ENCODE measurements at regions of chr12 and their contacts with region 1.

Region 1: DNA sequence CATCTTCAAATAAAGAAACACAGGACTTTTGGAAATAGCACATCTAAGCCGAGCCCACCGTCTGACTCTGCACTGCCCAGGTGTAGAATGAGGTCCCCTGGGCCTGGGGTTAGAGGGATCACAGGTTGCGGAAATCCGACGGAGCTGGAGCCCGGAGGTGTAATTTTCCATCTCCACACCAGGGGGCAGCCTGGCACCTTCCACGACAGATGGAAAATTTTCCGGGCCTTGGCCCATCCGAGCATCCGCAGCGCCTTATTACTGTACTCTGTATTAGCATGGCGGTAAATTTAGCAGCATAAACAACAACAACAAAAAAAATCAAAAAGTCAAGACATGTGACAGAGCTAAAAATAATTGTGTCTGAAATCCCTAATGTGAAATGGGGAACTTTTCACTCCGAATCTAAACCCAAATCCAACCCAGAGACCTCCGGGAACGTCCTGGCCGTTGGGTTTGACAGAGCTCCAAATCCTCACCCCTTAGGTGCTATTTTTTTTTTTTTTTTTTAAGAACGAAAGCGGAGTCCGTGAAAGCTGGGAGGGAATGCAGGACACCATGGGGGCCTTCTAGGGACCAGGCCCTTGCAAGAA is 93.9 kb downstream of the KSR2 start:
- DNase-seq: no peak
- H3K4me3 ChIP-seq: no peak overlapping the region
- H3K27me3 ChIP-seq: peaks cover 5% of the 10 kb centered on the region; the same call in 1 of the 2 replicates
- CTCF ChIP-seq: peak; percentile 89

Region 2: GRCh38 chr12:117857632-117858612 is 17.0 kb before region 1 on chr12:
- CTCF ChIA-PET with region 1: interaction called, 77 read pairs
- POLR2A ChIA-PET with region 1: no interaction called
- DNase-seq: no peak
- H3K4me3 ChIP-seq: no peak overlapping the region
- H3K27me3 ChIP-seq: no peaks in the 10 kb centered on the region; the same call in 1 of the 2 replicates
- CTCF ChIP-seq: peak; percentile 72

Region 3: DNA sequence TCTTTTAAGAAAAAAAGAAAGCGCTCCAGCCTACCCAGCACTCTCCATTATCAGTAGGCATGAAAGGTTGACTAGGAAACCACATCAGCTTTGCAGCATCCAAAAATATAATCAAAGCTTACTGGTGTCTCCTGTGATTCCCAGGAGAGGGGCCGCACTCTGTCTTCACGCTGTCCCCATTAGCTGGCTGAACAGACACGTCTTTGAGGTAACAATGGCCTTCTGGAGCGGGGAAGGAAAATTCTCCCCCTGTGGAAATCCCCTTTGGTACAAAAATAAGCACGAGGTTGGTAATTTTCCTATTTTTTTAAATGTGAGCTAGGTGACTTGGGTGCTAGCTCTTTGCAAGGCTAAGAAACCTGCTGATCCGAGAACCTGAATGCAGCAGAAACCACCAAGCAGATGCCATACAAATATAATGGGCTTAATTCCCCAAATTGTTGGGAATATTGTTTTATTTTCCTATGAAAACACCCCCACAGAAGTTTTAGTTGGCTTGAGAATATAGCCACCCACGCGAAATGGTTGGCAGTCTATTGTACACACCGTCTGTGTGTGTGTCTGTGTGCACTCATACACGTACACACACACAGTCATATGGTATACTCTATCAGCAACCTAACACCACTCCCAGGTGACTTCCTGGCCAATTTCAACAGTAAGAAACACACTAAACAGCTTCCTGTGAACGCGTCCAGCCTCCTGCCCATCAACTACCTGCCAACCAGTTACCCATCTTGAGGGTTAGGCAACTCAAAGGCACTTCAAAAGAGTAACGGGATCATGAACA is 22.6 kb after region 1 on chr12:
- CTCF ChIA-PET with region 1: interaction called, 11 read pairs
- POLR2A ChIA-PET with region 1: no interaction called
- DNase-seq: no peak
- H3K4me3 ChIP-seq: no peak overlapping the region
- H3K27me3 ChIP-seq: no peaks in the 10 kb centered on the region
- CTCF ChIP-seq: no peak

Region 4: GRCh38 chr12:118035246-118036041 is 160.5 kb after region 1 on chr12:
- CTCF ChIA-PET with region 1: interaction called, 27 read pairs
- POLR2A ChIA-PET with region 1: no interaction called
- DNase-seq: no peak
- H3K4me3 ChIP-seq: no peak overlapping the region
- H3K27me3 ChIP-seq: no peaks in the 10 kb centered on the region
- CTCF ChIP-seq: peak; percentile 16; the same call in 1 of the 2 replicates

Region 5: DNA sequence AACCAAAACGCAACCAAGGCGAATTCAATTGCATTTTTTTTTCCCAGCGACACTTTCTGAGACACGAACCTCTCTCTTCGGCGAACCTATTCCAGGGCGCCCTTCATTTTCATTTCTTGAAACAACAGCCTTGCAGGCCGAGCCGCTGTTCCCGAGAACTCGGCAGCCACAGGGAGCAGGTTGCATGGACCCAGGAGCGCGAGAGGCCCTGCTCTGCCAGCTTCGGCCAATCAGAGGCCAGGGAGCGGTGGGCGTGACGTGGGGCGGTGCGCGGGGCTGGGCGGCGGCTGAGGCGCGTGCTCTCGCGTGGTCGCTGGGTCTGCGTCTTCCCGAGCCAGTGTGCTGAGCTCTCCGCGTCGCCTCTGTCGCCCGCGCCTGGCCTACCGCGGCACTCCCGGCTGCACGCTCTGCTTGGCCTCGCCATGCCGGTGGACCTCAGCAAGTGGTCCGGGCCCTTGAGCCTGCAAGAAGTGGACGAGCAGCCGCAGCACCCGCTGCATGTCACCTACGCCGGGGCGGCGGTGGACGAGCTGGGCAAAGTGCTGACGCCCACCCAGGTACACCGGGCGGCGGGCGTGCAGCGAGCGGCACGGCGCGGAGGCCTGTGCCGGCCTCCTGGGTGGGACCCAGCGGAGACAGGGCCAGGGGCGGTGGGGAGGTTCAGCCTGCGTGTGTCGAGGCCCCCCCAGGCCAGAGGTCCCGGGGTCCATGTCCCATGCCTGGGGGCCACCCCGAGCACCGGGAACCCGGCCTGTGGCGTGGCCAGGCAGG is 261.0 kb after region 1 on chr12 and contains the start of gene PEBP1:
- CTCF ChIA-PET with region 1: interaction called, 10 read pairs
- POLR2A ChIA-PET with region 1: no interaction called
- DNase-seq: peak; percentile 52
- H3K4me3 ChIP-seq: peak within 1 kb of the TSS; percentile 90
- H3K27me3 ChIP-seq: no peaks in the 10 kb centered on the region
- CTCF ChIP-seq: peak; percentile 8; the same call in 1 of the 2 replicates
- polyA plus RNA-seq, gene PEBP1: 145 and 201 TPM in 2 replicates